HEK293T (cell line): ENCODE measurements at regions of chr22 and their contacts with region 1.

Region 1: DNA sequence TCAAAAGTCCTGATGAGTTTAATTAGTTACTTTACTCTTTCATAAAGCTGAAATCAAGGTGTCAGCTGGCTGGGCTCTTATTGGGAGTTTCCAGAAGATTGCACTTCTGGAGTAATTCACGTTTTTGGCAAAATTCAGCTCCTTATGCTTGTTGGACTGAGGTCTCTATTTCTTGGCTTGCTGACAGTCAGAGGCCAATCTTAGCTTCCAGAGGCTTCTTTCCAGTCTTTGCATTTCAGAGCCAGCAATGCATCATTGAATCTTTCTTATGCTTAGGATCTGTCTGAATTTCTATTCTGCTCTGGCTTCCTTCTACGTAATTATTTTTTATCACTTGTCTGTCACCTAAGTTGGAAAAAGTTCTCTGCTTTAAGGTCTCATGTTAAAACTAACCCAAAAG is 91.4 kb upstream of the SYN3 start:
- DNase-seq: no peak

Region 2: DNA sequence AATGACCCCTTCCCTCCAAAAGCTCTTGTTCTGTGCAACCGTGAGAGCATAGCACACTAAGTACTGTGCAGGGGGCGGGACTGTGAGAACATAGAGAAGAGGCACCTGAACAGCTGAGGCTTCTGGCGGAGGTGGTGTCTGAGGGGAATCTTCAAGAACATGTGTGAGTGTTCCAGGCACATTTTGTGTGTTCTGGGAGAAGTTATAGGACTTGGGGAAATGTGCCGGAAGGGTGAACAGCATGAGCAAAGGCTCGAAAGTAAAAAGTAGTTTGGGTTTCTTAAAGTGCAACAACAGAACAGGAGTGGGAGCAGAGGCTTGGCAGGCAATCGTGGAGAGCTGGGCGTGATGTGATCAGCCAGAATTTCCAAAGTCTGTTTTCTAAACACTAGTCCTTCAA is 79.0 kb before region 1 on chr22:
- CTCF ChIA-PET with region 1: no interaction called
- POLR2A ChIA-PET with region 1: no interaction called
- DNase-seq: no peak

Region 3: GRCh38 chr22:33129621-33130020 is 20.0 kb before region 1 on chr22:
- CTCF ChIA-PET with region 1: no interaction called
- POLR2A ChIA-PET with region 1: no interaction called
- DNase-seq: no peak

Region 4: DNA sequence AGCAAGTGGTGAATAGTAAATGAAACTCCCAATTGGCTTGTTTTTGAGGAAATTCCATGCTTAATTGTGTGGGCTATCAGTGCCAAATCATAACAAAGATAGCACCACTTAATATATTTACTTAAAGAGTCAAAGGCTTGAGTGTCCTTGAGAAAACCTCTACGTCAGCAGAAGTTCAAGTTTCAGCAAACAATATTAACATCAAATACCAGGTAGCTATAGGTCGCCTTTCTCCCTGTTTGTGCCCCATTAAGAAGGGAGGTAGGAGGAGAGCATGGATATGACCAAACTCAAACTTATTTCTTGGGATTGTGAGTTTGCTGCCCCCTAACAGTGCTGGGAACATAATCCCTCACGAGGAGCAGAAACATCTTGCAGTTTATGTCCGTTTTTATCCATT is 14.2 kb after region 1 on chr22:
- CTCF ChIA-PET with region 1: interaction called, 10 read pairs
- POLR2A ChIA-PET with region 1: no interaction called
- DNase-seq: no peak

Region 5: DNA sequence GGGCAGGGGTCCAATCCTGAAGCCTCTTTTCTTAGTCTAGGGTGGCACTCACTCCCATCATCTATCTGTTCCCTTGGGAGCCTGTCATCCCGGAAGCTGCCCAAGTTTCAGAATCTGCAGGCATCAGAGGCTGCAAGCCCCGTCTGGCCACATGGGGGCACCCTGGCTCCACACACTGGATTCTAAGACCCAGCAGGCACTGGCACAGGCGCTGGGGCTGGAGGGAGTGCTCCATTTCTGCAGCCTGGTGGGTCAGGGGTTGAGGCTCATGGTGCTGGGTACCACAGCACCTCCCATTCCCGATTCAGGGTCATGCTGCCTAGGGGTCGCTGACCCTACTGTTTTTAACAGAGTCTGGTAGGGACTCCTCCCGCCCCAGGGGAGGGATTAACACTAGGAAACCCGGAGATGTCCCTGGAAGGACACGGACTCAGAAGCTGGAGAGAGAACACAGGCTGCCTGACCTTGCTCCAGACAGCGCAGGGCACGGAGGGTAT is 152.5 kb after region 1 on chr22:
- CTCF ChIA-PET with region 1: no interaction called
- POLR2A ChIA-PET with region 1: no interaction called
- DNase-seq: peak; percentile 86